ENCODE measurements at regions of chr11 and their contacts with region 1.

Region 1: GRCh38 chr11:72609045-72609444 is 65.2 kb downstream of the PDE2A start:
- DNase-seq: no peak

Region 2: GRCh38 chr11:72635309-72635915 is 26.4 kb after region 1 on chr11:
- intact Hi-C with region 1: loop called (anchors 2 to 5 kb)
- DNase-seq: no peak

Region 3: DNA sequence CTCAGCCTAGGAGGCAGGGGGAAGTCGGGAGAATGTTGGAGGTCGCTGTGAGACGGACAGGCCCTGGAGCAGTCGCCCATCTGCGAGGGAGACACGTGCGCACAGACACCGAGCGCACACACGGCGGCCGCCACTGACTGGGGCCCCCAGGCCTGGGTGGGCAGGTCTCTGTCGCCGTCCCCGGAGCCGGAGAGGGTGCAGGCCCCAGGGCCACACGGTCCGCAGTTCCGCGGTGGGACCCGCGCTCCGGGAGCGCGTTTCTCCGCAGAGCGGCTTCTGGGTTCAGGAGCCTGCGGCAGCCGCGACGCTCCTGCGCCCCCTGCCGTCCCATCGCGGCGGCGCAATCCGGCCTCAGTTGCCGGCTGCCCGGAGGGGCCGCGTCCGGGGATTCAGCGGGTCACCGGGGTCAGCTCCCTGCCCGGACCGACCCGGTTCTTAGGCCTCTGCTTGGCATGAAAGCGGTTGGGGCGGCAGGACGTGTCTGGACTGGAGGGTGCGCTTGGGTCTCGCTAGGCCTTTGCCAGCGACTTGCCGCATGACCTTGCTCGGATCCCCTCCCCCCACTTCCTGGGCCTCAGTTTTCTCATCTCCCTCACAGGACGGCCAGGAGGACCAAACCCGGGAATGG is 34.0 kb after region 1 on chr11:
- intact Hi-C with region 1: loop called in 1 of 2 experiments (anchors 5 kb)
- DNase-seq: peak; percentile 89

Region 4: GRCh38 chr11:72831513-72832300 is 222.7 kb after region 1 on chr11:
- intact Hi-C with region 1: no loop called
- DNase-seq: peak; percentile 94

Region 5: GRCh38 chr11:73393479-73394380 is 784.7 kb after region 1 on chr11:
- intact Hi-C with region 1: no loop called
- DNase-seq: peak; percentile 91